ENCODE measurements at regions of chr6 and their contacts with region 1.

Region 1: DNA sequence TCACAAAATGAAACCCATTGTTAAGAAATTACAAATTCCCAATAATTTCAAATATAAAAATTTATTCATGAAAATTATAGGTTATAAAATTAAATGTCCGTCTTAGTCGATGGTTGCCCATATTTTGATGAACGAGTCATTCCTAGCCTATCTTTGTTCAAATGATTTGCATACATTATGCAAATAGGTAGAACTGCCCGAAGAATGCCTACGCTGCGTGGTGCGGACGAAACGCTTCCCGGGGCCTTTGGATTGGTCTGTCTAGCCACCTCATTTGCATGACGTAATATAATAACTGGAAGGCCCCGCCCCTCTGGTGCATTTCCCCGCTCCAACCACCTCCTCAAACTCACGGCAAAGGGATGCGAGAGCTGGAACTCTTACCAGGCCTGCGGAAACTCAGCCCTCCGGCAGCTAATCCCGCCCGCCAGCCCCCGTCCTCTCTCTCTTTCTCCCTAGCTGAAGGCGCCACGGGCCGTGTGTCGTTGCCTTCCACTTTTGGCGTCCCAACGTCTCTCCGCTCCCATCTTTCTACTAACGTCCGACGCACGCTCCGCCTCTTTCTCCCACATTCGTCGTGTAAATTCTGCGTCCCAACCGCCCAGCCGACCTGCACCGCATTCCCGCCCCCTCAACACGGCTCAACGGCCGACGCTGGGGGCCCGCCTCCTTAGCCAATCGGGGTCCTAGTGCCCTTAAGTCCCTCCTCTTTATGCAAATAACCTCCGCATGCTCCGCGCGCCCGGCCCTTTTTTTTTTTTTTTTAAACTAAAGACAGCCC is 520 bp upstream of the PRRC2A start:
- H3K4me3 ChIP-seq: peak overlapping the region; percentile 66
- H3K27ac ChIP-seq: peak overlapping the region; percentile 99
- H3K4me1 ChIP-seq: peaks cover 7% of the 10 kb centered on the region; the same call in 1 of the 2 replicates
- CTCF ChIP-seq: no peak

Region 2: DNA sequence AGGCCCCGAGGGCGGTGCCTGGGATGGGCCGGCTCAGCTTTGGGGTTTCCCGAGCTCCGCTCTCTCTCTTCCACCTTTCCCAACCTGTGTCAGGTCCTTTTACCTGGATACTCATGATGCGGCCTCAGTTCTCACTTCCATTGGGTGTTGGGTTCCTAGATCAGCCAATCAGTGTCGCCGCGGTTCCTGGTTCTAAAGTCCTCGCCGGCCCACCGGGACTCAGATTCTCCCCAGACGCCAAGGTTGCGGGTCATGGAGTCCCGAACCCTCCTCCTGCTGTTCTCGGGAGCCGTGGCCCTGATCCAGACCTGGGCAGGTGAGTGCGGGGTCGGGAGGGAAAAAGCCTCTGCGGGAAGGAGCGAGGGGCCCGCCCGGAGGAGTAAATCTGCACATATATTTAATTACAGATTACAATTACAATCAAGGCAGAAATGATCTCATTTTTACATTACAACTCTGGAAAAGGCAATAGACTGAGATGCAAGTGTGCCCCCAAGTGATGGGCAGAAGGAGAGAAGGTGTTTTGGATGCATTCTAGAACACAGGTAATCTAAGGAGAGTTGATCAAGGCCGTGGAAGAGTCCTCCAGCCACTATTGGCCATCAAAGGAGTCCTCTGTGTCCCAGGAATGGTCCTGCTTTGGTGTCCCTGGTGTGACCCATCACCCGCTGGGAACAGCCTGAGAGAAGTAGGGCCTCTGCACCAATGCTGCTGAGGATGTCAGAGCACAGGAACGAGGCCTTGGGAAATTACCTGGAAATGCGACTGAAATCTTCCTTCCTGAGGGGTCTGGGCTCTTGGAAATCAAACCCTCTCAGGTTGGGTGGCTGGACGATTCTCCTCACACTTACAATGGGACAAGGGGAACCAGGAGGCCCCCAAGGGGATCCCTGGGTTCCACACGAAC is 156.8 kb before region 1 on chr6:
- CTCF ChIA-PET with region 1: no interaction called
- POLR2A ChIA-PET with region 1: no interaction called
- H3K4me3 ChIP-seq: peak overlapping the region; percentile 37
- H3K27ac ChIP-seq: no peak overlapping the region
- H3K4me1 ChIP-seq: no peaks in the 10 kb centered on the region
- CTCF ChIP-seq: no peak

Region 3: DNA sequence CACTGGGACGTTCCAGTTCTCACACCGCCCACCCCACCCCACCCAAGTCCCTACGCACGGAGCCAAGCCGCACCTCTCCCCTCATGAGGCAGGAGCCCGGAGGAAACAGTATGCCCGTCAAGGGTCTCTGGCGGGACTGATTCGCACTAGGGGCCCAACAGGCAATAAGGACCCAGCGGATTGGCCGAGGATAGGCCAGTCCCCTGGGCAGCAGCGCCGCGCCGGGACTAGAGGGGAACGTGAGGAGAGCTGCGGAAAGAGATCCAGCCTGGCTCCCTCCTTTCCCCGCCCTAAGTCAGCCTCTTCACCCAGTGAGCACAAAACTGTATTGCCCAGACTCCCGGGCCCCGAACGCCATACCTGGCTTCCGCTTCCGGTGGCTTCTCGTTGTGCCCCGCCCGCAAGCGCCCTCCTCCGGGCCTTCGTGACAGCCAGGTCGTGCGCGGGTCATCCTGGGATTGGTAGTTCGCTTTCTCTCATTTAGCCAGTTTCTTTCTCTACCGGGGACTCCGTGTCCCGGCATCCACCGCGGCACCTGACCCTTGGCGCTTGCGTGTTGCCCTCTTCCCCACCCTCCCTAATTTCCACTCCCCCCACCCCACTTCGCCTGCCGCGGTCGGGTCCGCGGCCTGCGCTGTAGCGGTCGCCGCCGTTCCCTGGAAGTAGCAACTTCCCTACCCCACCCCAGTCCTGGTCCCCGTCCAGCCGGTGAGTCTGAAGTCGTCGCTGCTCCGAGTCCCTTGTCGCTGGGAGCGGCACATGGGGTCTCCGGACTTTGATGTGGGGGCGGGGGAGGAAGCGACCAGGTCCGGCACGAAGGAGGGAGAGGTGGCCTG is 45.7 kb after region 1 on chr6 and contains the start of gene CSNK2B:
- CTCF ChIA-PET with region 1: no interaction called
- POLR2A ChIA-PET with region 1: interaction called, 10 read pairs
- H3K4me3 ChIP-seq: peak within 1 kb of the TSS; percentile 92
- H3K27ac ChIP-seq: peak within 1 kb of the TSS; percentile 92
- H3K4me1 ChIP-seq: peaks cover 6% of the 10 kb centered on the region; the same call in 1 of the 2 replicates
- CTCF ChIP-seq: peak; percentile 75

Region 4: GRCh38 chr6:31689249-31690110 is 69.5 kb after region 1 on chr6:
- CTCF ChIA-PET with region 1: no interaction called
- POLR2A ChIA-PET with region 1: no interaction called
- H3K4me3 ChIP-seq: no peak overlapping the region
- H3K27ac ChIP-seq: no peak overlapping the region
- H3K4me1 ChIP-seq: no peaks in the 10 kb centered on the region
- CTCF ChIP-seq: no peak; the same call in 1 of the 2 replicates

Measured in HEK293 (cell line).